Ovary (tissue), 10 donors: ENCODE measurements at regions of chr5 and their contacts with region 1.

Region 1: GRCh38 chr5:55570026-55570425 is 35.3 kb upstream of the PLPP1 start:
- DNase-seq: no peak
- H3K4me3 ChIP-seq: no peak overlapping the region
- H3K27ac ChIP-seq: no peak overlapping the region
- H3K4me1 ChIP-seq: no peaks in the 10 kb centered on the region
- H3K27me3 ChIP-seq: no peaks in the 10 kb centered on the region
- CTCF ChIP-seq: no peak
- EP300 ChIP-seq: no peak
- POLR2A ChIP-seq: no peak

Region 2: GRCh38 chr5:55599148-55600050 is 29.4 kb after region 1 on chr5:
- intact Hi-C with region 1: loop called in 1 of 4 experiments (anchors 2 kb)
- DNase-seq: no peak
- H3K4me3 ChIP-seq: no peak overlapping the region
- H3K27ac ChIP-seq: no peak overlapping the region
- H3K4me1 ChIP-seq: peaks cover 12% of the 10 kb centered on the region
- H3K27me3 ChIP-seq: no peaks in the 10 kb centered on the region
- CTCF ChIP-seq: no peak
- EP300 ChIP-seq: no peak
- POLR2A ChIP-seq: no peak

Region 3: GRCh38 chr5:55966284-55966683 is 396.3 kb after region 1 on chr5:
- intact Hi-C with region 1: no loop called
- DNase-seq: no peak
- H3K4me3 ChIP-seq: no peak overlapping the region
- H3K27ac ChIP-seq: no peak overlapping the region
- H3K4me1 ChIP-seq: no peaks in the 10 kb centered on the region
- H3K27me3 ChIP-seq: no peaks in the 10 kb centered on the region
- CTCF ChIP-seq: no peak
- EP300 ChIP-seq: no peak
- POLR2A ChIP-seq: no peak